Activated CD8-positive, alpha-beta T cell treated with anti-CD3 and anti-CD28 coated beads, Interleukin-2, amount 10 ng/mL, durations not matched to agents 7 days and 5 days (primary cell): ENCODE measurements at regions of chr2 and their contacts with region 1.

Region 1: DNA sequence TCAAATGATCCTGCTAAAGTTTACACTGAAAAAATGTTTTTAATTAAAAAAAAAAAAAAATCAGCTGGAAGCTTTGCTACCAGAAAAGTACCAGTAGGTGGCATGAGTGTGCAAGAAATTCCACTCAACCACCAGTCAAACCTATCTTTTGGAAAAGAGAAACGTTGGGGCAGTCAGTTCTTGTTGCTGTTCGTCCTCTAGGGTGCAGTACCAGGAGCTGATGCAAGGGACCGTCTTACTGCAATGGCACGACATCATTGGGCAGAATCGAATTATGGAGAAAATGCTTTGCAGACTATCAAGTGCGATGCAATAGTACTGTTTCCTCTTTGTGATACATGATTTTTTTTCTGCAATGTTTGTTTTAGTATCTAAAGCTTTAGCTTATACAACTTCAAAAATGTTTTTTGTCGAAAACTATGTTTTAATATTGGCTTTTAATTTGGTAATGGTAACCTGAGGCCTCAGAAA is 18.3 kb downstream of the YPEL5 start:
- DNase-seq: peak; percentile 84
- ATAC-seq: peak; percentile 79
- H3K4me3 Mint-ChIP-seq: no peak overlapping the region
- H3K27ac Mint-ChIP-seq: no peak overlapping the region
- H3K4me1 Mint-ChIP-seq: peaks cover 17% of the 10 kb centered on the region
- H3K27me3 Mint-ChIP-seq: peaks cover 3% of the 10 kb centered on the region

Region 2: DNA sequence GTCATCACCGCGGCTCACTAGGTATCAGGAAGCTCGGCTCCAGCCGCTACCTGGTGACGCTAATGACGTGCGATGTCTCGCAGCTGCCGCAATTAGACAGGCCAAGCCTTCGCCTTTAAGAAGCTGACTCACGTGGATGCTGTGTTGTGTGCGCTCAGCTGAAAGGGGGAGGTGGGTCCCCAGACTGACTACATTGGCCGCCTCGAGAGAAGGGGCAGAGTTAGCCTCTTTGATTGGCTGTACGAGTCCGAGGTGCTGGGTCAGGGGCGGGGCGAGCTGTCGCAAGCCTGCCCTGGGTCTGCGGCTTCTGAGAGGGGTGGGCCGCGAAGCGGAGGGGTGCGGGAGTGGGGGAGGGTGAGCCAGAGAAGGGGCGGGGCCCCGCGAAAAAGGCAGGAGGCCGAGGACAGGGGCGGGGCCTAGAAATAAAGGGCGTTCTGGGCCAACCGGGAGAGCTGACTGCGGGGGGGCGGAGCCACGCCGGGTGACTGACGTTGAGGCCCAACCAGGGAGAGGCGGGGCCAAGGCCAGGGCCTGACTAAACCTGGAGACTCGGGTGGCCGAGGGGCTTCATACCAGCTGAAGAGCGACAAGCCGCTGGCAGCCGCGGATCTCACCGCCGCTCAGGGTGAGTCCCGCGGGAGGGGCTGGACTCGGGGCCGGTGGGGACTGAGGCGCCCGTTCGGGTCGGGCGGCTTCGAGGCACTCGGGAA is 18.5 kb before region 1 on chr2 and contains the start of gene YPEL5:
- CTCF ChIA-PET with region 1: interaction called, 174 read pairs
- POLR2A ChIA-PET with region 1: interaction called, 9 read pairs
- DNase-seq: peak; percentile 99
- ATAC-seq: peak; percentile 92
- H3K4me3 Mint-ChIP-seq: peak within 1 kb of the TSS; percentile 83
- H3K27ac Mint-ChIP-seq: peak within 1 kb of the TSS; percentile 95
- H3K4me1 Mint-ChIP-seq: peaks cover 31% of the 10 kb centered on the region
- H3K27me3 Mint-ChIP-seq: no peaks in the 10 kb centered on the region
- total RNA-seq, gene YPEL5: 32.5 to 34.9 TPM

Region 3: DNA sequence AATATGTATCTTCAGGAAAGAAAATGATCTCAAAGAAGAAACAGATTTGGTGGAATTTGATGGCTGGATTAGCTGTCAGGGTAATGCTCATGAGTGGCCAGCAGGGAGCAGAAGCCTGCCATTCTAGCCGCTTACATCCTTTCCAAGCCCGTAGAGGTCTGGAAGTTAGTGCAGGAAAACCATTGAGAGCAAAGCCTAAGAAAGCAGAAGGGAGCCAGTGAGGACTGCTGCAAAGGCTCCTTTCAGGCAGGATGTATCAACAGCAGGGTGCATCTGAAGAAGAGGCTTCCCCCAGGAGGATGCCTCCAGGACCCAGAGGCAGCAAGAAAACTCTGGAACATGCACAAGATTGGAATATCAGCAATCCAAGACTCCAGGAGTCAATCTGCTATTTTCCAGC is 43.4 kb after region 1 on chr2:
- CTCF ChIA-PET with region 1: interaction called, 63 read pairs
- POLR2A ChIA-PET with region 1: no interaction called
- DNase-seq: peak; percentile 53
- ATAC-seq: peak; percentile 75
- H3K4me3 Mint-ChIP-seq: no peak overlapping the region
- H3K27ac Mint-ChIP-seq: peak overlapping the region; percentile 49
- H3K4me1 Mint-ChIP-seq: peaks cover 18% of the 10 kb centered on the region
- H3K27me3 Mint-ChIP-seq: peaks cover 8% of the 10 kb centered on the region

Region 4: DNA sequence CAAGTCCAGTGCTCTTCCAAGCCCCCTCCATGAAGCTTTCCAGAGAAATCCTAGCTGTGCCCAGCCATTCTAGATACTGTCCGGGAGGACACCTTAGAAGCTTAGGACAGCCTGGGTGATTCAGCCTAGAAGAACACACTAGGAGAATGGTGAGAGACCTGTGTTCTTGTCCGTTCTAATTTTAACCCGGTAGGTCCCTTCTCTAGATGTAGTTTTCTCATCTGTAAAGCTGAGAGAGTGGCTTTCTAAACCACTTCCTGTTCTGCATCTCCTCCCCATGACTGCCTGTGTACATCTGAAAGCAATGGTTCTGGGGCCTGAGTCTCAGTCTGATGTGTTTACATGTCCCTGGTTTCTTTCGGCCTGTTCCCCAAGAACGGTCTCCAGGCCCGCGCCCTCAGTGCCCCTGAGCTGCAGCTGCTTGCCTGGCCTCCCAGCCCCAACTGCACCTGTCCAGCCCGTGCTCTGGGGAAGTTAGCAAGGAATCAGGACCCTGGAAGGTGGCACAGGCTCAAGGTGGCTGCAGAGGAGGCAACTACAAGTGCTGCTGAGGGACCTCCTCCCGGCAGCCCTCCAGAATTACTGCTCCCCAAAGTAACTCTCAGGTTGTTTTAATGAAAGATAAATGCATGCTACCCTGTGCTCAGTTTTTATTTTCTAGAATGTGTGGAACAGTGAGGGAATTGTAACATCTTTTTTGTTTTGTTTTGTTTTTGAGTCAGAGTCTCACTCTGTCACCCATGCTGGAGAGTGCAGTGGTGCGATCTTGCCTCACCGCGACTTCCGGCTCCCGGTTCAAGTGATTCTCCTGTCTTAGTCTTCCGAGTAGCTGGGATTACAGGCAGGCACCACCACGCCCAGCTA is 172.1 kb after region 1 on chr2:
- CTCF ChIA-PET with region 1: interaction called, 23 read pairs
- POLR2A ChIA-PET with region 1: no interaction called
- DNase-seq: peak; percentile 76
- ATAC-seq: peak; percentile 94
- H3K4me3 Mint-ChIP-seq: peak overlapping the region; percentile 71
- H3K27ac Mint-ChIP-seq: peak overlapping the region; percentile 97
- H3K4me1 Mint-ChIP-seq: peaks cover 69% of the 10 kb centered on the region
- H3K27me3 Mint-ChIP-seq: no peaks in the 10 kb centered on the region

Region 5: DNA sequence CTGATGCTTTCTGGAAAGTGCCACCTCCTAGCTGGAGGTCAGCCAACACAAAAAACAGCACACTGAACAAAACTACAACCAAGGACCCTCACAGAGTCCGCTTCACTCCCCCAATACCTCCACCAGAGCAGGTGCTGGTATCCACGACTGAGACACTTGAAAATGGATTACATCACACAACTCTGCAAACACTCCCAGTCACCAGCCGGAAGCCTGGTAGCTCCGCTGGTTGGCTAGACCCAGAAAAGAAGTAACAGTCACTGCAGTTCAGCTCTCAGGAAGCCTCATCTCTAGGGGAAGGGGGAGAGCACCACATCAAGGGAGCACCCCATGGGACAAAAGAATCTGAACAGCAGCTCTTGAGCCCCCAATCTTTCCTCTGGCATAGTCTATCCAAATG is 457.4 kb after region 1 on chr2:
- CTCF ChIA-PET with region 1: interaction called, 16 read pairs
- POLR2A ChIA-PET with region 1: no interaction called
- DNase-seq: peak; percentile 61
- ATAC-seq: peak; percentile 82
- H3K4me3 Mint-ChIP-seq: peak overlapping the region; percentile 23
- H3K27ac Mint-ChIP-seq: peak overlapping the region; percentile 65
- H3K4me1 Mint-ChIP-seq: peaks cover 16% of the 10 kb centered on the region
- H3K27me3 Mint-ChIP-seq: no peaks in the 10 kb centered on the region

Region 6: DNA sequence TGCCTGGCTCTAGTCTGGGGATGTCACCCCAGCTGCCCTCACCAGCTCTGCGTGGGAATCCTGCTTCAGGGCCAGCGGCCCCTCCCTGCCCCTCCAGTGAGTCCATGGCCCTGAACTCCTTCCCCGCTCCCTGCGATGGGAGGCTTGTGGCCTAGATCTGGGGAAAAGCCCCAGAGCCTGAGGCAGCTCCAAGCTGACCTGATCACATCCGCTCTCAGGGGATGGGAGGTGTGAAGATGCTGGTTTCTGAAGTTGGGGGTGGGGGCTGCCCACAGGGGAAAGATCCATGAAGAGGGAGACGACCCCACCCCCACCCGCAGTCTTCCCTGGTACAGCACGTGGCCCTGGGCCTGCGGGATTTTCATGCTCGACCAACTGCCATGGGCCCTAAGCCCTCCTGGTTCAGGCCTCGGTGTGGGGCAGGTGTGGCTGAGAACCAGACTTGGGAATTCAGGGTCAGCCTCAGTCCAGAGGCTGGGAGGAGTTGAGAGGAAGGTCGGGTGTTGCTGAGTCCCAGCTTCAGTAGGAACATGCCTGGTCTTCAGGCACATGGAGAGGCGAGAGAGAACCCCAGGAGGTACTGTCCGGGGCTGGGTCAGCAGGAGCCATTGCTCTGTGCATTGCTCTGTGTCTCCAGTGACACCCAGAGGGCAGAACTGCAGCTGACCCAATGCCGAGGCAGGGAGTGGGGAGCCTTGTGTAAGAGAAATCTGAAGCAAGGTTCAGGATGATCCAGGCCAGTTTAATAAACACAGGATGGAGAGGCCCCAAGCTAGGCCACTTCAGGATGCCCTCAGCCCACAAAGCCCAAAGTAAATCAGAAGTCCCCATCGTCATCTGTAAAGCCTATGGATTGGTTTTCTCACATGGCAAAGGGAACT is 527.1 kb after region 1 on chr2:
- CTCF ChIA-PET with region 1: interaction called, 31 read pairs
- POLR2A ChIA-PET with region 1: no interaction called
- DNase-seq: no peak
- ATAC-seq: no peak
- H3K4me3 Mint-ChIP-seq: no peak overlapping the region
- H3K27ac Mint-ChIP-seq: no peak overlapping the region
- H3K4me1 Mint-ChIP-seq: no peaks in the 10 kb centered on the region
- H3K27me3 Mint-ChIP-seq: peaks cover 2% of the 10 kb centered on the region